Dendritic cell treated with granulocyte-macrophage colony-stimulating factor and Interleukin-4, amounts not matched to agents 40 ng/mL and 50 ng/mL, for 4 days (primary cell): ENCODE measurements at regions of chr5 and their contacts with region 1.

Region 1: DNA sequence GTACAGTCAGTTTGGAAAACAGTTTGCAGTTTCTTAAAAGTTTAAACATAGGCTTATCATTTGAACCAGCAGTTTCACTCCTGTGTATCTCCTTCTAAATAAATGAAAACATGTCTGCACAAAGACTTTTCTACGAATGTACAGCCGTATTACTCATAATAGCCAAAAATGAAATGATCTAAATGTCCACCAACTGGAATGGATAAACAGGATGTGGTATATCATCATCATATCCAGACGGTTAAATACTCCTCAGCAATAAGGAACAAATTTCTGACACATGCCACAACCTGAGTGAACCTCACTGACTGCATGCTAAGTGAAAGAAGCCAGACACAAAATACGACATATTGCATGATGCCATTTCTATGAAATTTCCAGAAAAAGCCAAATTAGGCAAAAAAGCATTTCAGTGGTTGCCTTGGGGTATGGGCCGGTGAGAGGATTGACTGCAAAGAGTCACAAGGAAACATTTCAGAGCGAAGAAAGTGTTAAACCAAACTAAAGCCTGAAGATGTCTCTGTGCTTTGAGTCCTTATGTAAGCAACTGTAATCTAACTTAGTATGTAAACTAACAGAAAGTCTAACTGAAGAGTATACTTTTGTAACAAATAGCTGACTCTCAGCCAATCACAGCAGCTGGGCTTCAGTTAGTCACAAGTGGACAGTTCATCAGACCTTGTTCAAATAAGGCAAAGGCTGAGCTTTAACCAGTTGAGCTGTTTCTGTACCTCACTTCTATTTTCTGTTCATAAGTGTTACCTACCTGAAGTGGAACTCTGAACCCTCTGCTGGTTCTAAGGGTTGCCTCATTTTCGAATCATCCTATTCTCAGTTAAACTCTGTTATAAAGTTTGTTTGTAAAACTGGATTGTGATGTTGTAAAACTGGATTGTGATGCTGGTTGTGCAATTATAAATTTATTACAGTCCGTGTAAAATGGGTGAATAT is 65.2 kb downstream of the TRIO start:
- H3K4me3 Mint-ChIP-seq: no peak overlapping the region
- H3K27ac Mint-ChIP-seq: no peak overlapping the region
- H3K4me1 Mint-ChIP-seq: peaks cover 78% of the 10 kb centered on the region
- H3K27me3 Mint-ChIP-seq: no peaks in the 10 kb centered on the region

Region 2: DNA sequence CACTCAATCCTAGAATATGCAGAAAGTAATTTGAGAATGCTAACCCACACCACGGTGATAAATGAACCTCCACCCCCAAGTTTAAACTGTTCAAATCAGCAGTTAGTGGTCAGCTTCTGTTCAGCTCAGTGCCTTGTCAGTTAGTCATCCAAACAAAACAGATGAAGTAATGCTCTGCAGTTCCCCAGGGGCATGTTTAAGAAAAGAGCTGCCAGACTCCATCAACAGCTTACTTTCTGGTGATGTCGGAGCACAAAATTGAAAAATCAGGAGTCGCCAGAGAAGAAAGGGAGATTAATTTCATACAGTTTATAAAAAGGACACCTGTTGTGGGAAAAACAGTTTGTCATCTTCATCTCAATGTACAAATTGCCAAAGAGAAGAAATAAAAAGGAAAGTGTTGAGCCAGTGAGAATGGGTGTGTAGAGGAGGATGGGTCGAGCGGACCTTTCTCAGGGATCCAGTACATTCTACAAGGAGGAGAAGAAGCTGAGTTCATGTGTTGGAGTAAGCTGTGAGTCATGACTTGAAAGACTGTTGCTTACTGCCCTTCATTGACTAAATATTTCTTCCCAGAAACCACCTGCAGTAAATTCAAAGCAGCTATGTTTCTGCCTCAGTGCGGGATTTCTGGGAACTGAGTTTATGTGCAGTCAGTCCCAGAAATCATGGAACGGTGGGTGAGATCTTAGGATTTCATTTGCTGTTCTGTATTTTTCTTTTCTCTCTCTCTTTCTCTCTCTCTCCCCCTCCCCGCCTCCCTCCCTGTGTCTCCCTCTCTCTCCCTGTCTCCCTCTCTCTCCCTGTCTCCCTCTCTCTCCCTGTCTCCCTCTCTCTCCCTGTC is 51.5 kb before region 1 on chr5:
- intact Hi-C with region 1: no loop called
- H3K4me3 Mint-ChIP-seq: no peak overlapping the region
- H3K27ac Mint-ChIP-seq: peak overlapping the region; percentile 20
- H3K4me1 Mint-ChIP-seq: peaks cover 16% of the 10 kb centered on the region
- H3K27me3 Mint-ChIP-seq: no peaks in the 10 kb centered on the region

Region 3: DNA sequence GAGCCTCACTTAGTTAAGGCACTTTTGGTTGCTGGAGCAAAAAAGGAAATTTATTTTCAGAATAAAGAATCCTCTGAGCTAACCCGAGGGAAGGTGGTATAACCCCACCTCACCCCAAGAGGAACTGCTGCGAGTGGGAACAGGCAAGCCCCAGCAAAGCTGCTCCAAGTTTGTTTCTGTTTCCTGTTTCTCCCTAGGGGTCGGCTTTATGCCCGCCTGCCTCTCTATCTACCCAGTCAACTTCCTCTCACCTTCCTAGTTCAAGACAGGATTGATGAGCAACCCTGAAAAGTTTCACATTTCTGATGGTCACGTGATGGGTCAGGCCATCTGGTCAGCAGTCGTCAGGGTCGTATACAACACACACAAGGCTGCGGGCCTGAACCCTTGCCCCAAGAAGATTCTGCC is 34.1 kb before region 1 on chr5:
- intact Hi-C with region 1: loop called (anchors 5 kb)
- H3K4me3 Mint-ChIP-seq: peak overlapping the region; percentile 55
- H3K27ac Mint-ChIP-seq: peak overlapping the region; percentile 70
- H3K4me1 Mint-ChIP-seq: peaks cover 51% of the 10 kb centered on the region
- H3K27me3 Mint-ChIP-seq: no peaks in the 10 kb centered on the region

Region 4: GRCh38 chr5:14463629-14464028 is 255.3 kb after region 1 on chr5:
- intact Hi-C with region 1: no loop called
- H3K4me3 Mint-ChIP-seq: no peak overlapping the region
- H3K27ac Mint-ChIP-seq: peak overlapping the region; percentile 73
- H3K4me1 Mint-ChIP-seq: peaks cover 35% of the 10 kb centered on the region
- H3K27me3 Mint-ChIP-seq: no peaks in the 10 kb centered on the region

Region 5: GRCh38 chr5:14676320-14676719 is 468.0 kb after region 1 on chr5:
- intact Hi-C with region 1: no loop called
- H3K4me3 Mint-ChIP-seq: peak overlapping the region; percentile 37
- H3K27ac Mint-ChIP-seq: peak overlapping the region; percentile 81
- H3K4me1 Mint-ChIP-seq: peaks cover 74% of the 10 kb centered on the region
- H3K27me3 Mint-ChIP-seq: no peaks in the 10 kb centered on the region